ENCODE measurements at regions of chr5 and their contacts with region 1.

Region 1: GRCh38 chr5:78483809-78484521 is 123.5 kb downstream of the SCAMP1 start:
- DNase-seq: no peak
- ATAC-seq: peak; percentile 99
- H3K4me3 Mint-ChIP-seq: no peak overlapping the region
- H3K27ac Mint-ChIP-seq: peak overlapping the region; percentile 60
- H3K4me1 Mint-ChIP-seq: peaks cover 20% of the 10 kb centered on the region
- H3K27me3 Mint-ChIP-seq: no peaks in the 10 kb centered on the region
- CTCF ChIP-seq: no peak

Region 2: DNA sequence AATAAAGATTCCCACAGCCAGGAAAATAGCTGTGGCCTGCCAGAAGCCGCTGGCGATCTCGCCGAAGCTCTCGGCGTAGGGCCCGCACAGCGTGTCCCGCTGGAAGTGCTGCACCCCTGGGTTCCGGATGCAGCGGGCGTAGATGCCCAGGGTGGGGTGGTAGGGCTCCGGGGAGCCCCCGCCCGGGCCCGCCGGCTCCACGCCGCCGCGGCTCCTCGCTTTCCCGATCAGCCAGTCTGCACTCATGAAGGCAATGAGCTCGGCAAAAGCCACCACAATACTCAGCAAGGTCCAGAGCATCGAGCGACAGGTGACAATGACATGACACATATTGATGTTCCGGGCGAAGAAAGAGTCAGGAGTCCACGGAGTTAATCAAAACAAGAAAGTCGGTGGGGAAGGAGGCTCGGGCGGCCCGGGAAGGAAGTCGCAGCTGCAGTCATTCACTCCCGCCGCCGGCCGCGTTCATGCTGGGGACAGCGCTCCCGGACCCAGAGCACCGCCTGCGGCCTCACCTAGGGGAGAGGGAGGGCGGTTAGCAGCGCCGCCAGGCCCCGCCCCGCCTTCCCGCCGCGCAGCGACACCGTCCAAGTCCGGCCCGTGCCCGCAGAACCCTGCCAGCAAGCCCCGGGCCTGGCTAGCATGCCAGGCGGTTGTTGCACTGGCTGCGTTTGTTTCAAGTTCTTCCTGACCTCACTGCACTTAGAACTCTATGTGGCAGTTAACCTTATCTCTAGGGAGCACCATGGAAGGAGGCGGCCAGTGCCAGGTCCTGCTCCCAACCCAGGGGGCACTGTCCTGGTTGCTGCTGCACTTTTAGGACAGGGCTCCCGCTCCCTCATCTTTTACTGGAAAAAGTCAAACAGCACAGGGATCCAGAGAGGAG is 26.2 kb after region 1 on chr5:
- CTCF ChIA-PET with region 1: no interaction called
- POLR2A ChIA-PET with region 1: no interaction called
- intact Hi-C with region 1: loop called (anchors 2 kb)
- DNase-seq: peak; percentile 49
- ATAC-seq: peak; percentile 82
- H3K4me3 Mint-ChIP-seq: peak overlapping the region; percentile 76
- H3K27ac Mint-ChIP-seq: no peak overlapping the region
- H3K4me1 Mint-ChIP-seq: peaks cover 27% of the 10 kb centered on the region
- H3K27me3 Mint-ChIP-seq: no peaks in the 10 kb centered on the region
- CTCF ChIP-seq: no peak

Region 3: DNA sequence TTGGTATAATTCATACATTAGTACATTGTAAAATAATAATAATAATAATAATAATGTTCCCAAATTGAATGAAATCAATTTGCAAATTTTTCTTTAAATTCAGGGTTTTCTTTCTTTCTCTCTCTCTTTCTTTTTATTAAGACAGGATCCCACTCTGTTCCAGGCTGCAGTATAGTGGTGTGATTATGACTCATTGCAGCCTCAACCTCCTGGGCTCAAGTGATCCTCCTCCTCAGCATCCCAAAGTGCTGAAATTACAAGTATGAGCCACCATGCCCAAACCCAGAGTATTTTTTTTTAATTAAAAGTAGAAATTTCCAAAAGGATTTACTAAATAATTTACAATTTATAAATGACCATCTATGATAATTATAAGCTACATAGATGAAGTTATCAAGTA is 912.3 kb after region 1 on chr5:
- CTCF ChIA-PET with region 1: no interaction called
- POLR2A ChIA-PET with region 1: no interaction called
- intact Hi-C with region 1: no loop called
- DNase-seq: no peak
- ATAC-seq: no peak
- H3K4me3 Mint-ChIP-seq: no peak overlapping the region
- H3K27ac Mint-ChIP-seq: no peak overlapping the region
- H3K4me1 Mint-ChIP-seq: no peaks in the 10 kb centered on the region
- H3K27me3 Mint-ChIP-seq: no peaks in the 10 kb centered on the region
- CTCF ChIP-seq: no peak